AG04449 (cell line): ENCODE measurements at regions of chr12 and their contacts with region 1.

Region 1: GRCh38 chr12:15532364-15532977 is 210.2 kb downstream of the PTPRO start:
- DNase-seq: no peak
- H3K4me3 ChIP-seq: no peak overlapping the region
- CTCF ChIP-seq: peak; percentile 45

Region 2: GRCh38 chr12:15276088-15276698 is 256.3 kb before region 1 on chr12:
- CTCF ChIA-PET with region 1: interaction called, 66 read pairs
- POLR2A ChIA-PET with region 1: no interaction called
- DNase-seq: no peak
- H3K4me3 ChIP-seq: no peak overlapping the region
- CTCF ChIP-seq: peak; percentile 57

Region 3: DNA sequence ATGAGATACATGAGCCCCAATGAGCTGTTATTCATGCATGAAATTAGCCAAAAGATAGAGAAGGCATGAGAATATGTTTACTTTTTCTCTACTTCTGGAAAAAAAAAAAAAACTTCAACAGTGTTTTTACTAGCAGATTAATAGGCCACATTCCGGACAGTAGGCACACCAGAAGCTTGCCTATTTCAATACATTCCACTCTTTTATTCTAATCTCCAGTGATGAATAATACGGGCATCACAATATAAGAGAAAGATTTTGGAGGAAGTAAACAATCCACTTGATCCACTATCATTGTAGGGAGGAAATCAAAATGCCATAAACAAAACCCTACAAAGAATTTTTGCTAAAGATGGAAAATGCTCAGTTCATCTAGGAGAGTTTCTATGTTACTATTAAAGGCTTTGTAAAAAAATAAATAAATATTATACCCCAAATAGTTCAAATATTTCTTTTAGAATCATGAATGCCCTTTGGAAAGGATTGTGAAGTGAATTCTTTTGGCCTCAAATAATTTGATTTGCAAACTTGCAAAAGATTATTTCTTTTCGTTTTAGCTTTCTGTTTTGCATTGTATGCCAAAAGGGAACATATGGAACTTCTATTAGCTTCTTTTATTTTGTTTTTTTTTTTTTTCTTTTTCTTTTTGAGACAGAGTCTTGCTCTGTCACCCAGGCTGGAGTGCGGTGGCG is 24.1 kb after region 1 on chr12:
- CTCF ChIA-PET with region 1: interaction called, 25 read pairs
- POLR2A ChIA-PET with region 1: no interaction called
- DNase-seq: no peak
- H3K4me3 ChIP-seq: no peak overlapping the region
- CTCF ChIP-seq: no peak

Region 4: DNA sequence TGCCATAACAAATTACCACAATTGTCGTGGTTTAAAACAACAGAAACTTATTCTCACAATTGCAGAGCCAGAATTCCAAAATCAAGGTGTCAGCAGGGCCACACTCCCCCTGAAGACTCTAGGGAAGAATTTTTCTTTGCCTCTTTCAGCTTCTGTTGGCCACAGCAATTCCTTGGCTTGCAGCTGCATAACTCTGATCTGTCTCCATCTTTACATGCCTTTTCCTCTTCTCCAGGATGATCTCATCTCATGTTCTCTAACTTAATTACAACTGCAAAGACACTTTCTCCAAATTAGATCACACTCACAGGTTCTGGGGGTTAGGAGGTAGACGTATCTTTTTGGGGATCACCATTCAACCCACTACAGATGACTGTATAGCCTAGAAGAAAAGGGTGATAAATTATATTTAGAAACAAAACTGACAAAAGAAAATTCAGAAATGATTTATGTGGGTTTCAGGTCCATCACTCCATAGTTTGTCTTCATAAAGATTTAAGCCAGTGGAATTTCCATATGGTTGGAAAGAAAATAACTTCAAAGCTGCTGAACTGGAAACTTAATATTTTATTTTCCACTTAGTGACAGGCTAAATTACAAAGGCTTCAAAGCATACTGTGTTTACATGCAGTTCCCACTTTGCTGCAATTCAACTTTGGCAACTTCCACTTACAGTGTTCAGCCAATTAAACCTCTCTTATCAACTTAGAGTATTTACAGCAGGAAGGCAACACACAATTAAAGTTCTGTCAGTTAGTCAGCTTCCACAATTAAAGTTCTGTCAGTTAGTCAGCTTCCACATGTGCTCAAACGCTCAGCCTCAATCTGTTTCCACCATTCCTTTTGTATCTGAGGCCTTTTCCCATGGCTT is 43.4 kb after region 1 on chr12:
- CTCF ChIA-PET with region 1: interaction called, 542 read pairs
- POLR2A ChIA-PET with region 1: no interaction called
- DNase-seq: no peak
- H3K4me3 ChIP-seq: no peak overlapping the region
- CTCF ChIP-seq: no peak

Region 5: DNA sequence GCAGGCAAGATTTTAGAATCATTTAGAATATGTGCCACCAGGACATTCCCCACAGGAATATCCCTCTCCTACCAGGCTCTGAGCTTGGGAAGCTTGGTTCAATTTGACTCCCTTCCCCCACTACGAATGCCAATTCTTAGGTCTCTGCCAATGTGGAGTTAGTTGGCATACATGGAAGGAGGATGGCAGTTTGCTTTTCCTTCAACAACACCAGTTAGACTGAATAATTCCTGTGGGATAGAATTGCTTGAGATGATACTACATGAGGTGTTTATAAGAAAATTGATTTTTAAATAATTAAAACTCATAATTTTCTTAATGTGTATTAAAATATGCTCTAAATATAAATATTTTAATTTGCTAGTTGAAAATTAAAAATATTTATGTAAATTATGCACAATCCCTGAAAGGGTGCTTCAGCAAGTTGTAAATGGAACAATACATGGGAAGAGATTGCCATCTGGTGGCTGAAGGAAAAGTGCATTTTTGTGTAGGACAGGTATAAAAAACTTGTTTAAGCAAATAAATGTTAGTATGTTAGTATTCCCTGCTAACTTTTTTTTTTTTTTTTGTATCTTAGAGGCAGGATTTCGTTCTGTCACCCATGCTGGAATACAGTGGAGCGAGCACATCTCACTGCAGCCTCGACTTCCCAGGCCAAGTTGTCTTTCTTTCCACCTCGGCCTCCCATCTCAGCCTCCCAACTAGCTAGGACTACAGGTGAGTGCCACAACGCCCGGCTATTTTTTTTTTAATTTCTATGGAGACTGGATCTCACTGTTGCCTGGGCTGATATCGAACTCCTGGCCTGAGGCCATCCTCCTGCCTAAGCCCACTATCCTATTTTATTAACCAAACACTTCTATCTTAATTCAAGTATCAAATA is 323.9 kb after region 1 on chr12:
- CTCF ChIA-PET with region 1: interaction called, 99 read pairs
- POLR2A ChIA-PET with region 1: no interaction called
- DNase-seq: no peak
- H3K4me3 ChIP-seq: no peak overlapping the region
- CTCF ChIP-seq: peak; percentile 49